Heart right ventricle (tissue), 16 donors: ENCODE measurements at regions of chr9 and their contacts with region 1.

Region 1: GRCh38 chr9:72592502-72593403 is 71.3 kb downstream of the TMC1 start:
- DNase-seq: peak in 1 of 2 donors; percentile 30
- ATAC-seq: peak; percentile 77 to 88 (median 80)
- H3K4me3 ChIP-seq: no peak overlapping the region
- H3K27ac ChIP-seq: peak overlapping the region in 3 of 10 donors; percentile 4 to 60 (median 57)
- H3K4me1 ChIP-seq: peaks cover 0 to 44% (median 5%) of the 10 kb centered on the region in 9 donors
- H3K27me3 ChIP-seq: no peaks in the 10 kb centered on the region
- CTCF ChIP-seq: peak; percentile 78 to 93 (median 88)

Region 2: GRCh38 chr9:72280913-72281500 is 311.7 kb before region 1 on chr9:
- intact Hi-C with region 1: loop called in 1 of 10 experiments (anchors 5 kb)
- DNase-seq: peak; percentile 62 to 66
- ATAC-seq: peak; percentile 62 to 94 (median 84)
- H3K4me3 ChIP-seq: no peak overlapping the region
- H3K27ac ChIP-seq: no peak overlapping the region
- H3K4me1 ChIP-seq: no peaks in the 10 kb centered on the region
- H3K27me3 ChIP-seq: no peaks in the 10 kb centered on the region
- CTCF ChIP-seq: peak; percentile 90 to 97 (median 94)

Region 3: GRCh38 chr9:72356041-72356582 is 236.6 kb before region 1 on chr9:
- intact Hi-C with region 1: loop called in 6 of 10 experiments (anchors 5 to 10 kb)
- DNase-seq: no peak
- ATAC-seq: peak in 2 of 8 donors; percentile 1 to 40
- H3K4me3 ChIP-seq: no peak overlapping the region
- H3K27ac ChIP-seq: peak overlapping the region in 3 of 10 donors; percentile 16 to 57 (median 22)
- H3K4me1 ChIP-seq: peaks cover 17 to 84% (median 65%) of the 10 kb centered on the region in 9 donors
- H3K27me3 ChIP-seq: no peaks in the 10 kb centered on the region
- CTCF ChIP-seq: no peak

Region 4: DNA sequence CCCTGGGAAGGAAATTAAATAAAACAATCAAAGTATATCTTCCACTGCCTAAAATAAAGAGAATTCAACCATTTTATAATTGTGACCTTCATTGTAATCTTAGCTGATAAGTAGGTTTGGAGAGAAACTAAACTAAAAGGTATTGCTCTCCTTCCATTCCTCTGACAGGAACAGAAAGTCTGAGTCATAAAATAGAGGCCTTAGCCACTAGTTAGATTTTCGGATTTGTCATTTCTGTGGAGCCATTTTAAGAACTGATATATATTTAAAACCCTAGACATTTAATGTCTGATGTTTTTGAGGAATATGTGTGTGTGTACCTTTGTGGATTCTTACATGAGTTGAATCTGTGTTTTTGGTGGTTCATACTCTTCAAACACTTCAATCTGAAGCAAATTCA is 83.1 kb before region 1 on chr9:
- intact Hi-C with region 1: no loop called
- DNase-seq: no peak
- ATAC-seq: no peak
- H3K4me3 ChIP-seq: no peak overlapping the region
- H3K27ac ChIP-seq: no peak overlapping the region
- H3K4me1 ChIP-seq: peaks cover 0 to 7% (median 0%) of the 10 kb centered on the region in 9 donors
- H3K27me3 ChIP-seq: no peaks in the 10 kb centered on the region
- CTCF ChIP-seq: no peak

Region 5: GRCh38 chr9:72661401-72662135 is 68.8 kb after region 1 on chr9:
- intact Hi-C with region 1: no loop called
- DNase-seq: no peak
- ATAC-seq: no peak
- H3K4me3 ChIP-seq: no peak overlapping the region
- H3K27ac ChIP-seq: no peak overlapping the region
- H3K4me1 ChIP-seq: no peaks in the 10 kb centered on the region
- H3K27me3 ChIP-seq: no peaks in the 10 kb centered on the region
- CTCF ChIP-seq: no peak

Region 6: DNA sequence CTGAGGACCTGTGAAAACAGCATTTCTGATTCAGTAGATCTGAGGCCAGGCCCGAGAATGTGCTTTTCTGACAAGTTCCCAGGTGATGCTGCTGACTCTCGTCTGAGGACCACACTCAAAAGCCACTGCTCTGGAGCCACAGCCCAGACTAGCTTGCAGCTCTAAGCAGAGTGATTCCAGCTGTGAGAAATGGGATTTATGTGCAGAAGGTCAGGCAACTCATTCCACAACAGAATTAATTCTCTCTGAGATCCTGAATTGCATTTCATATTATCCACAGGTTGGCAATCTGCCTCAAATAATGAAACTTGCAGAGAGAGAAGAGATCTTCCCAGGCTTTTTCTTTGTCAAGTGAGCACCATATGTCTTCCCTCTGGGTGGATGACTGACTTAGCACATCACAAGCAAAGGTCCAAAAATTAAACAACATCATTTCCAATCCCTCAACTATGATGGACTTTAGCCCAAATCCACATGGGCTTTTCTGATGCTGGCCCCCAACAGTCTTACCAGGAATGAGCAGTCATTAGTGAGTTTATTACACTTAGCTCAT is 219.9 kb after region 1 on chr9:
- intact Hi-C with region 1: loop called in 1 of 10 experiments (anchors 10 kb)
- DNase-seq: no peak
- ATAC-seq: peak in 4 of 8 donors; percentile 11 to 52 (median 26)
- H3K4me3 ChIP-seq: no peak overlapping the region
- H3K27ac ChIP-seq: no peak overlapping the region
- H3K4me1 ChIP-seq: no peaks in the 10 kb centered on the region
- H3K27me3 ChIP-seq: no peaks in the 10 kb centered on the region
- CTCF ChIP-seq: no peak